ENCODE measurements at regions of chr1 and their contacts with region 1.

Region 1: GRCh38 chr1:229227298-229227919 is 43.5 kb upstream of the RAB4A start:
- DNase-seq: peak; percentile 82
- H3K4me3 Mint-ChIP-seq: no peak overlapping the region
- H3K27ac Mint-ChIP-seq: no peak overlapping the region
- H3K4me1 Mint-ChIP-seq: peaks cover 5% of the 10 kb centered on the region
- H3K27me3 Mint-ChIP-seq: peaks cover 25% of the 10 kb centered on the region

Region 2: GRCh38 chr1:228664399-228664914 is 563.0 kb before region 1 on chr1:
- CTCF ChIA-PET with region 1: interaction called, 68 read pairs
- POLR2A ChIA-PET with region 1: no interaction called
- DNase-seq: peak; percentile 80
- H3K4me3 Mint-ChIP-seq: no peak overlapping the region
- H3K27ac Mint-ChIP-seq: no peak overlapping the region
- H3K4me1 Mint-ChIP-seq: no peaks in the 10 kb centered on the region
- H3K27me3 Mint-ChIP-seq: peaks cover 20% of the 10 kb centered on the region

Region 3: GRCh38 chr1:228691926-228692325 is 535.5 kb before region 1 on chr1:
- CTCF ChIA-PET with region 1: interaction called, 25 read pairs
- POLR2A ChIA-PET with region 1: no interaction called
- DNase-seq: no peak
- H3K4me3 Mint-ChIP-seq: no peak overlapping the region
- H3K27ac Mint-ChIP-seq: no peak overlapping the region
- H3K4me1 Mint-ChIP-seq: peaks cover 10% of the 10 kb centered on the region
- H3K27me3 Mint-ChIP-seq: peaks cover 28% of the 10 kb centered on the region

Region 4: DNA sequence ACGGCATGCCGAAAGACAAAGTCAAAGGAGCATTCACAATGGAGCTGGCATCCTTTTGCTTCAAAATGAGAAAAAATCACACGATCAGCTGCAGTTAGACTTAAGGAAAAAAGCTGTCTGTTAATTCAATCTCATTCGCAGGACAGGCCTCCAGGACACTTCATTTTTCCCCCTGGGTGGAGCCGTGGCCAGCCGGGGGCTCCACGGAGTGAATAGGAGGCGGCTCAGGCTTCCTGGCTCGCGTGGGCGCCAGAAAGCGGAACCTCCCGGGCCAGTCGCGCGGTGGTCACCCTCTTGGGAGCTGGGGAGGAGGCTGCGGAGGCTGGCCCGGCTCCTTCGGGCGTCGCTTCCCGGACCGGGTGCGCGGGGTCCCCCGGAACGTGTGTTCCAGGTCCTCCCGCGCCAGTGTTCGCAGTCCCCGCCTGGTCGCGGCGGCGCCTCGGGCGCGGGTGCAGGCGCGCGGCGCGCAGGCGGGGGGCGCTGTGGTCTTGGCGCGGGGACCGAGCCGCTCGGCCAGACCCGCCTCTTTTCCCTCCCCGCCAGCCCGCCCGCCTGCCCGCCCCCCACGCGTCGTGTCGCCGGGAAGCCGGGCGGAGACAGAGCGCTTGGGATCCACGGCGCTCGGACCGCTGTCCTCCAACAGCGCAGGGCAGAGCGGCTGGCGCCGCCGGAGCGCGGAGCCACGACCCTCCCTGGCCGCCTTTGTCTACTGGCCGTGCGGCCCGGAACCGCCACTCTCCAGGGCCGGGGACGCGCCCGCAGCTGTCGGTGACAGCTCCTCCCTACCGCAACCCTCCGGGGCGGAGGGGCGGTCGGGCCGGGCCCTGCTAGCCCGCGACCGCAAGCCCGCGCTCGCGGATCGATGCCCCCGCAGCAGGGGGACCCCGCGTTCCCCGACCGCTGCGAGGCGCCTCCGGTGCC is 492.3 kb before region 1 on chr1 and contains the start of gene RHOU:
- CTCF ChIA-PET with region 1: interaction called, 75 read pairs
- POLR2A ChIA-PET with region 1: interaction called, 3 read pairs
- DNase-seq: peak; percentile 74
- H3K4me3 Mint-ChIP-seq: peak within 1 kb of the TSS; percentile 79
- H3K27ac Mint-ChIP-seq: peak within 1 kb of the TSS; percentile 42
- H3K4me1 Mint-ChIP-seq: peaks cover 20% of the 10 kb centered on the region
- H3K27me3 Mint-ChIP-seq: peaks cover 27% of the 10 kb centered on the region
- total RNA-seq, gene RHOU: 4.5 TPM